AG04450 (cell line): ENCODE measurements at regions of chr6 and their contacts with region 1.

Region 1: GRCh38 chr6:150068720-150069648 is at the start of gene ULBP3:
- DNase-seq: peak; percentile 81
- H3K4me3 ChIP-seq: peak within 1 kb of the TSS; percentile 76
- H3K27ac ChIP-seq: peak within 1 kb of the TSS; percentile 61
- H3K27me3 ChIP-seq: no peaks in the 10 kb centered on the region
- CTCF ChIP-seq: peak; percentile 63
- polyA plus RNA-seq, gene ULBP3: 13.1 and 16.0 TPM in 2 replicates

Region 2: DNA sequence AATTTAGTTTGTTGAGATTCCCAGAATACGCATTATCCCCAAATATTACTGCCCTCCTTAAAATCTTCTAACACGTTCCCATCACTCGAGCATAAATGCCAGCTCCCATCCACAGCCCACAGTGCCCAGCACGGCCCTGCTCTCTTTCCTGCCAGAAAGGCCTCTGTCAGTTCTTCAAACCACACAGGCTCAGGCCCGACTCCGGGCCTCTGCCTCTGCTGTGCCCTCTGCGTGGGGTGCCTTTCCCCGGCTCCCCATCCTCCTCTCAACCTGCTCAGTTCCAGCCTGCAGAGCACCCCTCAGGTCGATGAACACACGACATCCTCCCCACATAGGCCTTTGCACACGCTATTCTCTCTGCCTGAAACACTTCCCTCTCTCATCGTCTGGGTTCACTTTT is 12.8 kb before region 1 on chr6:
- CTCF ChIA-PET with region 1: interaction called, 11 read pairs
- POLR2A ChIA-PET with region 1: no interaction called
- DNase-seq: no peak
- H3K4me3 ChIP-seq: no peak overlapping the region
- H3K27ac ChIP-seq: no peak overlapping the region
- H3K27me3 ChIP-seq: peaks cover 30% of the 10 kb centered on the region
- CTCF ChIP-seq: no peak

Region 3: GRCh38 chr6:150177952-150178520 is 109.1 kb after region 1 on chr6:
- CTCF ChIA-PET with region 1: no interaction called
- POLR2A ChIA-PET with region 1: no interaction called
- DNase-seq: no peak
- H3K4me3 ChIP-seq: no peak overlapping the region
- H3K27ac ChIP-seq: no peak overlapping the region
- H3K27me3 ChIP-seq: no peaks in the 10 kb centered on the region
- CTCF ChIP-seq: no peak

Region 4: GRCh38 chr6:150243620-150244314 is 174.8 kb after region 1 on chr6:
- CTCF ChIA-PET with region 1: no interaction called
- POLR2A ChIA-PET with region 1: no interaction called
- DNase-seq: no peak
- H3K4me3 ChIP-seq: no peak overlapping the region
- H3K27ac ChIP-seq: no peak overlapping the region
- H3K27me3 ChIP-seq: no peaks in the 10 kb centered on the region
- CTCF ChIP-seq: no peak